Left cardiac atrium (tissue), 4 donors: ENCODE measurements at regions of chr6 and their contacts with region 1.

Region 1: GRCh38 chr6:101393251-101393828 is at the start of gene GRIK2:
- DNase-seq: peak; percentile 33
- ATAC-seq: peak; percentile 75 to 89
- total RNA-seq, gene GRIK2: 5.0 to 12.6 TPM

Region 2: GRCh38 chr6:101597693-101598092 is 204.4 kb after region 1 on chr6:
- intact Hi-C with region 1: loop called in 1 of 2 experiments (anchors 10 kb)
- DNase-seq: no peak
- ATAC-seq: no peak